ENCODE measurements at regions of chr2 and their contacts with region 1.

Region 1: GRCh38 chr2:85188852-85189587 is 55.8 kb downstream of the TCF7L1 start:
- DNase-seq: no peak
- ATAC-seq: 0 out of 2 replicates have a peak, but pooled peaks have one; percentile 7
- H3K4me3 Mint-ChIP-seq: no peak overlapping the region
- H3K27ac Mint-ChIP-seq: peak overlapping the region; percentile 42; the same call in 1 of the 2 replicates
- H3K4me1 Mint-ChIP-seq: peaks cover 62% of the 10 kb centered on the region
- H3K27me3 Mint-ChIP-seq: no peaks in the 10 kb centered on the region
- CTCF ChIP-seq: no peak

Region 2: DNA sequence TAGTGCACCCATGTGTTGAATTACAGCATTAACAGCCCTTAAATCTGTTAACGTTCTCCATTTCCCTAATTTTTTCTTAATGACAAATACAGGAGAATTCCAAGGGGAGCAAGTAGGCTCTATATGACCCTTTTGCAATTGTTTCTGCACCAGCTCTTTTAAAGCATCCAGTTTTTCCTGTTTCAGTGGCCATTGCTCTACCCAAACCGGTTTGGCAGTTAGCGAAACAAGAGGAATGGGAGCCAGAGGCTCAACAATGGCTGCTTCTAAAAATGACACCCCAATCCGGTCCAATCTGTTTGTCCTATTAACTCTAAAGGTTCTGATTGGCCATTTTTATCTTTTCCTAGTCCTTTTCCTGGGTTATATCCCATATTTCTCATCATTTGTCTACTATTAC is 714.8 kb before region 1 on chr2:
- CTCF ChIA-PET with region 1: no interaction called
- POLR2A ChIA-PET with region 1: no interaction called
- DNase-seq: no peak
- ATAC-seq: no peak
- H3K4me3 Mint-ChIP-seq: no peak overlapping the region
- H3K27ac Mint-ChIP-seq: no peak overlapping the region
- H3K4me1 Mint-ChIP-seq: no peaks in the 10 kb centered on the region
- H3K27me3 Mint-ChIP-seq: peaks cover 10% of the 10 kb centered on the region; the same call in 1 of the 2 replicates
- CTCF ChIP-seq: no peak

Region 3: DNA sequence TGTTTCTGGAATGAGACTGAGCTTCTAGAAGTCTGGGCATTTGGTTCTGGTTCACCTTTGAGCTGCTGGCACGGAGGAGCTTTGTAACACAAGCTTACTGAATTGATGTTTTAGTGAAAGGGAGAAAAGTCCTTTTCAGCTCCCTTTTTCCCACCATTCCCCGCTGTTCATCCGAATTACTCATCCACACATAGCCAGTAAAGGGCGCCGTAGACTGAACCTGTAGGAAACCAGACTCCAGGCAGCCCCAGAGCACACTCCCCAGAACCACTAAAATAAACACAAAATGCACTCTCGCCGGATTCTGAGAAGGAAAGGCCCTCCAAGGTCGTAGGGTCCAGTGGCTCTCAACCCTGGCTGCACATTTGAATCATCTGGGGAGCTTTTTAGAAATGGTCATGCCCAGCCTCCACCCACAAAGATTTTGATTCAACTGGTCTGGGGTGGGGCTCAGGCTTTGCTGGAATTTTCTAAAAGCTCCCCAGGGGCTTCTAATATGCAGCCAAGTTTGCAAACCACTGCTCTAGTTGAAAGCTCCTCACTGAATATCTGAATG is 26.2 kb before region 1 on chr2:
- CTCF ChIA-PET with region 1: interaction called, 23 read pairs
- POLR2A ChIA-PET with region 1: no interaction called
- DNase-seq: no peak
- ATAC-seq: no peak
- H3K4me3 Mint-ChIP-seq: no peak overlapping the region
- H3K27ac Mint-ChIP-seq: peak overlapping the region; percentile 75
- H3K4me1 Mint-ChIP-seq: peaks cover 81% of the 10 kb centered on the region
- H3K27me3 Mint-ChIP-seq: no peaks in the 10 kb centered on the region
- CTCF ChIP-seq: no peak

Region 4: GRCh38 chr2:85199698-85200097 is 10.7 kb after region 1 on chr2:
- CTCF ChIA-PET with region 1: interaction called, 22 read pairs
- POLR2A ChIA-PET with region 1: interaction called, 4 read pairs
- DNase-seq: no peak
- ATAC-seq: no peak
- H3K4me3 Mint-ChIP-seq: no peak overlapping the region
- H3K27ac Mint-ChIP-seq: 0 out of 2 replicates have a peak overlapping the region, but pooled peaks have one; percentile 12
- H3K4me1 Mint-ChIP-seq: peaks cover 21% of the 10 kb centered on the region
- H3K27me3 Mint-ChIP-seq: no peaks in the 10 kb centered on the region
- CTCF ChIP-seq: no peak

Region 5: GRCh38 chr2:85230679-85231467 is 41.9 kb after region 1 on chr2:
- CTCF ChIA-PET with region 1: interaction called, 11 read pairs
- POLR2A ChIA-PET with region 1: interaction called, 3 read pairs
- DNase-seq: peak; percentile 44
- ATAC-seq: peak; percentile 50
- H3K4me3 Mint-ChIP-seq: peak overlapping the region; percentile 18; the same call in 1 of the 2 replicates
- H3K27ac Mint-ChIP-seq: peak overlapping the region; percentile 84
- H3K4me1 Mint-ChIP-seq: peaks cover 80% of the 10 kb centered on the region
- H3K27me3 Mint-ChIP-seq: no peaks in the 10 kb centered on the region
- CTCF ChIP-seq: no peak

Region 6: DNA sequence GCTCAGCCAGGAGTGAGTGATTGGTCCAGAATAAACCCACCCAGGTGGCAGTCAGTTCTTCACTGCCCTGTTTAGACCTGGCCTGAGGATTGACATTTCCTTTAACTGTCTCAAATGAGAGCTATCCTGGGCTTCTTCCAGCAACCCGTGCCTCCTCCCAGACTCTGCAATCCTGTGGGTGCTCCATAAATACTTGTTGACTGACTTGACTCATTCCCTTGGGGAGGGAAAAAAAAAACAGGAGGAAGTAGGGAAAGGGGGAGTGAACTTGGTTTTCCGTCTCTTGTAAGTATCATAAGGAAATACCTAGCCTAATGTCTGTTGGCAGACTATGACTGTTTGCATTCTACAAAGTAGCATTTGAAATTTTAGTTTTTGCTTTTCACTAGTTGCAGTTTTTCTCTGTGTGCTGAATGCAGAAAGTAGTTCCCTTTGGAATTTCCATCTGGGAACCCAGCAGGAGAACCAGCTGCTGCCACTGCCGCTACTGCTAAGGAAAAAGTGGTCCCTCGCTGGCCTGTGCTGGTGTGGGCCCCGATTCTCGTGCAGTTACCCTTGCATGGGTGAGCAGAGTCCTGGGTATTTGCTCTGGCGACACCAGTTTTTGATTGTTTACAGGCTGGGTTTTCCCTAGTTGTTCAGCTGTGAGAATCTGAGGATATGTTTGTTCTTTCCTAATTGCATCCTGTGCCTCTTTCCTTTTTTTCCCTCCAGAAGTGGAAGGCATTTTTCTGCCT is 59.9 kb after region 1 on chr2:
- CTCF ChIA-PET with region 1: interaction called, 14 read pairs
- POLR2A ChIA-PET with region 1: interaction called, 3 read pairs
- DNase-seq: no peak
- ATAC-seq: peak; percentile 14
- H3K4me3 Mint-ChIP-seq: peak overlapping the region; percentile 50
- H3K27ac Mint-ChIP-seq: peak overlapping the region; percentile 97
- H3K4me1 Mint-ChIP-seq: peaks cover 96% of the 10 kb centered on the region
- H3K27me3 Mint-ChIP-seq: no peaks in the 10 kb centered on the region
- CTCF ChIP-seq: no peak

Region 7: GRCh38 chr2:85302121-85302520 is 113.1 kb after region 1 on chr2:
- CTCF ChIA-PET with region 1: interaction called, 13 read pairs
- POLR2A ChIA-PET with region 1: interaction called, 4 read pairs
- DNase-seq: no peak
- ATAC-seq: no peak
- H3K4me3 Mint-ChIP-seq: no peak overlapping the region
- H3K27ac Mint-ChIP-seq: no peak overlapping the region
- H3K4me1 Mint-ChIP-seq: peaks cover 11% of the 10 kb centered on the region
- H3K27me3 Mint-ChIP-seq: no peaks in the 10 kb centered on the region
- CTCF ChIP-seq: no peak

Region 8: DNA sequence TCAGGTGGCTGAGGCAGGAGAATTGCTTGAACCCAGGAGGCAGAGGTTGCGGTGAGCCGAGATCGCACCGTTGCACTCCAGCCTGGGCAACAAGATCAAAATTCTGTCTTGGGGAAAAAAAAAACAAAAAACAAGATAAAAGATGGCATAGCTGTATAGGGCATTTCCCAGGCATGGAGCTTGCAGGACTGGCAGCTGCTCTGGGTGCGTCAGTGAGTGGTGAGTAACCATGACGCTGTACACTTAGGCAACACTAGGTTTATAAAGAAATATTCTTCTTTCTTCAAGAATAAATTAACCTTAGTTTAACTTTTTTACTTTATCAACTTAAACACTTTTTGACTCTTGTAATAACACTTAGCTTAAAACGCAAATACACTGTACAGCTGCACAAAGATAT is 123.4 kb after region 1 on chr2:
- CTCF ChIA-PET with region 1: no interaction called
- POLR2A ChIA-PET with region 1: no interaction called
- DNase-seq: no peak
- ATAC-seq: no peak
- H3K4me3 Mint-ChIP-seq: no peak overlapping the region
- H3K27ac Mint-ChIP-seq: no peak overlapping the region
- H3K4me1 Mint-ChIP-seq: peaks cover 19% of the 10 kb centered on the region
- H3K27me3 Mint-ChIP-seq: no peaks in the 10 kb centered on the region
- CTCF ChIP-seq: no peak